CD8-positive, alpha-beta T cell (primary cell): ENCODE measurements at regions of chr2 and their contacts with region 1.

Region 1: DNA sequence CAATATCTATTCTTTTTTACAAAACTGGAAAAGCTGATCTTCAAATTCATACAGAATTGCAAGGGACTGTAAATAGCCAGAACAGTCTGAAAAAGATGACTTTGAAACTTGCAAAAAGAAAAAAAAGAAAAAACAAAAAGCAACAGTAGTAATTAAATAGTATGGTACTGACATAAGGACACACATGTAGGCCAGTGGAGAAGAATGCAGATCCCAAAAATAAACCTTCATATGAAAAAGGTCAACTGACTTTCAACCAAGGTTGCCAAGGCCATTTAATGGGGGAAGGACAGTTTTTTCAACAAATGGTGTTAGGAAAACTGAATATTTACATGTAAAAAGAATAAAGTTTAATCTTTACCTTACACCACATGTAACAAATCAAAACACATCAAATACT is 111.8 kb downstream of the USP34 start:
- DNase-seq: no peak
- ATAC-seq: no peak
- H3K4me3 ChIP-seq: no peak overlapping the region
- H3K4me3 Mint-ChIP-seq: no peak overlapping the region
- H3K27ac ChIP-seq: no peak overlapping the region
- H3K27ac Mint-ChIP-seq: no peak overlapping the region
- H3K4me1 ChIP-seq: no peaks in the 10 kb centered on the region
- H3K4me1 Mint-ChIP-seq: peaks cover 52% of the 10 kb centered on the region
- H3K27me3 ChIP-seq: no peaks in the 10 kb centered on the region
- H3K27me3 Mint-ChIP-seq: no peaks in the 10 kb centered on the region
- CTCF ChIP-seq: no peak

Region 2: GRCh38 chr2:61343141-61343540 is 15.9 kb before region 1 on chr2:
- CTCF ChIA-PET with region 1: no interaction called
- POLR2A ChIA-PET with region 1: no interaction called
- intact Hi-C with region 1: loop called in 1 of 2 experiments (anchors 1 kb)
- DNase-seq: no peak
- ATAC-seq: no peak
- H3K4me3 ChIP-seq: no peak overlapping the region
- H3K4me3 Mint-ChIP-seq: no peak overlapping the region
- H3K27ac ChIP-seq: no peak overlapping the region
- H3K27ac Mint-ChIP-seq: no peak overlapping the region
- H3K4me1 ChIP-seq: no peaks in the 10 kb centered on the region
- H3K4me1 Mint-ChIP-seq: no peaks in the 10 kb centered on the region
- H3K27me3 ChIP-seq: no peaks in the 10 kb centered on the region
- H3K27me3 Mint-ChIP-seq: no peaks in the 10 kb centered on the region
- CTCF ChIP-seq: no peak